ENCODE measurements at regions of chr12 and their contacts with region 1.

Region 1: DNA sequence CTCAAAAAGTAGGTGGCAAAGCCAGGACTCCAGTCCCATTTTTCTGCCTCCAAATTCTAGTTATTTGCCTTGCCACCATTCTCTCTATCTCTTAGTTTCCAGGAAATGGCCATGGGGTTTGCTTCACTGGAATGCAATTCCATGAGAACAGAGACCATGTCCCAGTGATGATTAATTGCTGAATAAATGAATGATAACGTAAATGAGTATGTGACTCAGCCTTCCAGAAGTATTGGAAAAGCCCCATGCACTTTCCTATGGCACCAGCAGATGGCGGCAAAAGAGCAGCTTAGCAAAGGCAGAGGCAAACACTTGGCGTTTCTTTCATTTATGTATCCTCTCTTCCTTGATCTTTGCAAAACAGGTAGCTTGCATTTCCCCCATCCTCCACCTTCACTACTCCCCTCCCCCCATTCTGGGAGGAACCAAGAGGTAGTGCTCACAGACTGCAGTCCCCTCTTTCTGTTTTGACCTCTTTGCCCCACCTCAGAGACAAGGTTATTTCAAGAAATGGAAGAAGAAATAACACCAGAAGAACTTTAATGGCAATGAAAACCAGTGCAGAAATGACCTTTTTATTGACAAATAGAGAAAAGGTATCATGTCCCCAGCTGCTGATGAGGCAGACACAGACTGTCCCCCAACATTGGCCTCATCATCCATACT is 21.3 kb downstream of the TBX3 start:
- DNase-seq: peak; percentile 3
- ATAC-seq: peak; percentile 60
- H3K4me3 ChIP-seq: no peak overlapping the region
- H3K27ac ChIP-seq: no peak overlapping the region
- H3K4me1 ChIP-seq: no peaks in the 10 kb centered on the region
- H3K27me3 ChIP-seq: peaks cover 3 to 7% of the 10 kb centered on the region in 2 experiments
- CTCF ChIP-seq: peak; percentile 86 to 92 (median 89)
- EP300 ChIP-seq: no peak
- POLR2A ChIP-seq: no peak
- RAD21 ChIP-seq: peak; percentile 99

Region 2: DNA sequence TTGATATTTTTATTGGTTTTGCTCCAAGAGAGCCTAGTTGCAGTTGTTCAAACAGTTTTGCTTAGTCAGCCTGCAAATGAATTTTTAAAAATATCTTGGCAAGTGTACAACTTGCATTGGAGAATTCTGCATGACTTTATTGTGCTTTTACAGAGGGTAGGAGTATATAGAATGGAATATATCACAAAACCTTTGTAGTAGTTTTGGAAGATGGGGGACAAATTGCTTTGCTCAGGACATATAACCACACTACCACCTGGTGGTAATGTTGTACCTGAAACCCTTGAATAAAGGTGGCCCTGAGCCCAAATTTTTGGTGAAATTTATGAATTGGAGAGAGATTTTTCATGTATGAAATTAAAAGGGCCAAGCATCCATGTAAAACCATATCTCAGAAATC is 969.7 kb after region 1 on chr12:
- CTCF ChIA-PET with region 1: no interaction called
- POLR2A ChIA-PET with region 1: no interaction called
- RAD21 ChIA-PET with region 1: no interaction called
- SMC1A ChIA-PET with region 1: no interaction called
- in situ Hi-C with region 1: loop called (anchors 10 kb)
- intact Hi-C with region 1: loop called (anchors 2 kb)
- DNase-seq: no peak
- ATAC-seq: no peak
- H3K4me3 ChIP-seq: no peak overlapping the region
- H3K27ac ChIP-seq: no peak overlapping the region
- H3K4me1 ChIP-seq: no peaks in the 10 kb centered on the region
- H3K27me3 ChIP-seq: no peaks in the 10 kb centered on the region
- CTCF ChIP-seq: peak; percentile 19 to 27 (median 21); a peak in 4 of 6 replicates
- EP300 ChIP-seq: no peak
- POLR2A ChIP-seq: no peak
- RAD21 ChIP-seq: peak; percentile 70

Region 3: DNA sequence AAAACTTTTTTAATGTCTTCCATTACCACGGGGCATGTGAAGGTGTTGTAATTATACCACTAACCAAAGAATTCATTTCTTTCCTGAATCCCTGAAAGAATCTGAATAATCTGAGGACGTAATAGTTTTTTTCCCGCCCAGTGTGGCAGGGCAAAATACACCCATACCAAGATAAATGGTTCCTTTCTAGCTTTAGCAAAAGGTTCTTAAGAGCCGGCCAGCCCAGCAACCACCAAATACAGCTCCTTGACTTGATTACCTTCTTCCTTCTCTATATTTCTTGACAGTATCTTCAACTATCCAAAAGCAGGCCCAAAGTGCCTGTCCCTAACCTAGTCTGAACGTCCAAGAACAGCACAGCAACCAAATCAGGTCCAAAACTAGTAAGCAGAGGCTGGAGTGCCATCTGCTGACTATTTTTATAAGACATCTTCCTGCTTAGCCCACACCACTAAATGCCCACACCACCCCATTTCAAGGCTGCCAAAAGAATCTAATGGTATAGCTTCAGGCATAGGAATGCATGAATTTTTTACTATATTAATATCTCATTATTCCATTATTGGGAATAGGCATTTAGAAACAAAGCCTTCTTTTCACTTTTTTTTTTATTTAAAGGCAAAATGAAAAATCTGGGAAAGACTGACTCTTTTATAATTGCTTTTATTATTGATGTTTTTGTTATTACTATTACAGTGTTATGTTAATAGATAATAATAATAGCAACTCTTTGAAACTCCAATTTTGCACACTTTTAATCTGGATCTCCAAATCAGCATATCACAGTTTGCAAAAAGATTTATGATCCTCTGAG is 1090.5 kb after region 1 on chr12:
- CTCF ChIA-PET with region 1: interaction called, 11 read pairs
- POLR2A ChIA-PET with region 1: no interaction called
- RAD21 ChIA-PET with region 1: interaction called, 8 read pairs
- SMC1A ChIA-PET with region 1: interaction called, 3 read pairs
- in situ Hi-C with region 1: loop called (anchors 5 kb)
- intact Hi-C with region 1: loop called (anchors 1 kb)
- DNase-seq: peak; percentile 12
- ATAC-seq: peak; percentile 77
- H3K4me3 ChIP-seq: no peak overlapping the region
- H3K27ac ChIP-seq: no peak overlapping the region
- H3K4me1 ChIP-seq: no peaks in the 10 kb centered on the region
- H3K27me3 ChIP-seq: peaks cover 0 to 2% of the 10 kb centered on the region in 2 experiments; a peak in 1 of 4 replicates
- CTCF ChIP-seq: peak; percentile 41 to 63 (median 62); a peak in 5 of 6 replicates
- EP300 ChIP-seq: no peak
- POLR2A ChIP-seq: no peak
- RAD21 ChIP-seq: peak; percentile 82

Measured in GM12878 (cell line).